HEK293 (cell line): ENCODE measurements at regions of chr10 and their contacts with region 1.

Region 1: GRCh38 chr10:20181434-20181833 is 365.2 kb downstream of the PLXDC2 start:
- H3K4me3 ChIP-seq: no peak overlapping the region
- H3K27ac ChIP-seq: no peak overlapping the region
- H3K4me1 ChIP-seq: no peaks in the 10 kb centered on the region
- CTCF ChIP-seq: no peak

Region 2: GRCh38 chr10:20110125-20111100 is 71.0 kb before region 1 on chr10:
- CTCF ChIA-PET with region 1: interaction called, 10 read pairs
- POLR2A ChIA-PET with region 1: no interaction called
- H3K4me3 ChIP-seq: no peak overlapping the region
- H3K27ac ChIP-seq: no peak overlapping the region
- H3K4me1 ChIP-seq: no peaks in the 10 kb centered on the region
- CTCF ChIP-seq: no peak